T-cell (primary cell): ENCODE measurements at regions of chr18 and their contacts with region 1.

Region 1: GRCh38 chr18:5532066-5532465 is 11.7 kb downstream of the EPB41L3 start:
- DNase-seq: no peak
- ATAC-seq: no peak
- H3K4me3 ChIP-seq: no peak overlapping the region
- H3K4me3 Mint-ChIP-seq: no peak overlapping the region
- H3K27ac ChIP-seq: no peak overlapping the region
- H3K27ac Mint-ChIP-seq: no peak overlapping the region
- H3K4me1 ChIP-seq: no peaks in the 10 kb centered on the region
- H3K4me1 Mint-ChIP-seq: no peaks in the 10 kb centered on the region
- H3K27me3 ChIP-seq: peaks cover 0 to 3% of the 10 kb centered on the region in 2 experiments
- H3K27me3 Mint-ChIP-seq: peaks cover 5 to 17% of the 10 kb centered on the region in 2 donors

Region 2: DNA sequence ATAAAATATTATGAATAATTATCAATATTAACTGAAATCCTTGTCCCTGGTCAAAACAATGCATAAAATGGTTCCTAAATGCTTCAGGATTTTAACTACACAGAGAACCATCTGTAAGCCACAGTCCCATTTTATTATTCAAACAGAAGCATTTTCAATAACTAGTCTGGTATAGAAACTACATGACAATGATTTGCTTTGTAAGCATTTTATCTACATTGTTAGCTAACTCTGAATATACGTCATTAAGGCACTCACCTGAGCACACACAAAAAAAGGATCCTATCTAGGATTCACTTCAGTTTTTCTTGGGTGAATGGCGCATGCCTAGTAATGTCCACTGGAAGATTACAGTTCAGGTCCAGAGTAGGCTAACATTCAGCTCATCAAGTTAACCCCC is 11.1 kb before region 1 on chr18:
- CTCF ChIA-PET with region 1: interaction called in 1 of 2 experiments, 11 read pairs
- POLR2A ChIA-PET with region 1: no interaction called
- DNase-seq: no peak
- ATAC-seq: no peak
- H3K4me3 ChIP-seq: no peak overlapping the region
- H3K4me3 Mint-ChIP-seq: no peak overlapping the region
- H3K27ac ChIP-seq: no peak overlapping the region
- H3K27ac Mint-ChIP-seq: no peak overlapping the region
- H3K4me1 ChIP-seq: no peaks in the 10 kb centered on the region
- H3K4me1 Mint-ChIP-seq: peaks cover 0 to 3% (median 0%) of the 10 kb centered on the region in 3 donors
- H3K27me3 ChIP-seq: peaks cover 0 to 13% of the 10 kb centered on the region in 2 experiments
- H3K27me3 Mint-ChIP-seq: peaks cover 9 to 24% of the 10 kb centered on the region in 2 donors